ENCODE measurements at regions of chr3 and their contacts with region 1.

Region 1: GRCh38 chr3:39383045-39383880 is at the start of gene SLC25A38:
- DNase-seq: peak; percentile 91
- ATAC-seq: peak; percentile 84
- H3K4me3 Mint-ChIP-seq: peak within 1 kb of the TSS; percentile 94
- H3K27ac Mint-ChIP-seq: peak within 1 kb of the TSS; percentile 99
- H3K4me1 Mint-ChIP-seq: peaks cover 39% of the 10 kb centered on the region
- H3K27me3 Mint-ChIP-seq: no peaks in the 10 kb centered on the region
- CTCF ChIP-seq: peak; percentile 45
- total RNA-seq, gene SLC25A38: 25.0 to 28.2 TPM

Region 2: DNA sequence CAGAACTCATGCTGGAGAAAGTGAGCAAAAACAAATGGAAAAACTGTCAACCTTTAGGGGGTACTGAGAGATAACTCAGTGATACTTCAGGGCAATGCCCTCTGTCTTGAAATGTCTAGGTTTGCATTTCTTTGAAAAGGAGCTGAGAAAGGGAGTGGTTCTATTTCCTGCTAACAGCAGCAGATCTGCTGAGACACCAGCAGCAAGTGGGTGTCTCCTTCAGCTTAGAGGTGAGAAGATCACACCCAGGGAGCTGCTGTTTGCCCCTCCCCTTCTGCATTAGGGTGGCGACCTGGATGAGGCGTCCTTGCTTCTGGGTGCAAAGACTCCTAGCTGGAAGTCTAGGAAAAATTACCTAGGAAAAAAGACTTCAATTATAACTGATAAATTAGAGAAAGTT is 148.6 kb before region 1 on chr3:
- CTCF ChIA-PET with region 1: no interaction called
- POLR2A ChIA-PET with region 1: no interaction called
- intact Hi-C with region 1: no loop called
- DNase-seq: peak; percentile 46
- ATAC-seq: peak; percentile 96
- H3K4me3 Mint-ChIP-seq: no peak overlapping the region
- H3K27ac Mint-ChIP-seq: peak overlapping the region; percentile 64
- H3K4me1 Mint-ChIP-seq: peaks cover 14% of the 10 kb centered on the region
- H3K27me3 Mint-ChIP-seq: peaks cover 7% of the 10 kb centered on the region
- CTCF ChIP-seq: no peak

Region 3: DNA sequence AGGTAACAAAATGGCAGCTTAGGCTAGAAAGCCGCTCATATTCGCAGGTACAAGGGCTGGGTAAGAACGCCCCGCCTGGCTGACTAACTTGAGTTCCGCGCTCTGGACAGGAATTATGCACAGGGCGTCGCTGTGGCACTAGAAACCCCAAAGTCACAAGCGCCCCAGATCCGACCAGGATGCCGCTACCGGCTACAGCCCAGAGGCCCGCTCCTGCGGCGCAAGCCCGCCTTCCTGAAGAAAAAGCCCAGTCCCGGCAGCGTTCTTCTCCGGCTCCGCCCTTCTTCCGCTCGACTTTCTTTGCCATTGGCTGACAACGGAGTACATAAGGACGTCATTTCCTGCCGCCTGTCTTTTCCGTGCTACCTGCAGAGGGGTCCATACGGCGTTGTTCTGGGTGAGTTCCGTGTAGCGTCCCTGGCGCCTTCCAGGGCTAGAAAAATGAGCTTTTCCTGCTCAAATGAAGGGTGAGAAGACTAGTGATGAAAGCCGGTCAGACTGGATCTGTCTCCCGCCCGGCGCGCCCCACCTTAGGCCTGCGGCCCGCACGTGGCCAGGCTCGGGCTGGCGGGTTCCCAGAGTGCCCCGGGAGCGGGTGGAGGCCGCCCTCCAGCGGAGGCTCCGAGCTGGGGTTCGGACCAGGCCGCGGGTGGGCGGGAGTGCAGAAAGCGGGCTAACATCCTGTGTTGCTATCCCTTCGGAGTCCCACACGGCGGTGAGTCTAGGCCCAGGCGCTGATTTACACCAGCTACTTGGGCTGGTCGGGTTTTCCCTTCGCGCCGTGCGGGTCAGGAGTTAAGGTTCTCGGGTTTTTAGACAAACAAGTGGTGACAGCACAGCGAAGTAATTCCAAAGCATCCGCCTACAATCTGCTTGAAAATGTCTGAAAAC is 23.4 kb after region 1 on chr3 and contains the start of gene RPSA:
- CTCF ChIA-PET with region 1: interaction called, 8 read pairs
- POLR2A ChIA-PET with region 1: interaction called, 170 read pairs
- intact Hi-C with region 1: no loop called
- DNase-seq: peak; percentile 98
- ATAC-seq: peak; percentile 89
- H3K4me3 Mint-ChIP-seq: peak within 1 kb of the TSS; percentile 95
- H3K27ac Mint-ChIP-seq: peak within 1 kb of the TSS; percentile 99
- H3K4me1 Mint-ChIP-seq: peaks cover 44% of the 10 kb centered on the region
- H3K27me3 Mint-ChIP-seq: no peaks in the 10 kb centered on the region
- CTCF ChIP-seq: peak; percentile 26
- total RNA-seq, gene RPSA: 3,048 to 3,061 TPM

Region 4: GRCh38 chr3:39423436-39423970 is 40.2 kb after region 1 on chr3:
- CTCF ChIA-PET with region 1: no interaction called
- POLR2A ChIA-PET with region 1: no interaction called
- intact Hi-C with region 1: no loop called
- DNase-seq: no peak
- ATAC-seq: no peak
- H3K4me3 Mint-ChIP-seq: no peak overlapping the region
- H3K27ac Mint-ChIP-seq: no peak overlapping the region
- H3K4me1 Mint-ChIP-seq: no peaks in the 10 kb centered on the region
- H3K27me3 Mint-ChIP-seq: no peaks in the 10 kb centered on the region
- CTCF ChIP-seq: no peak

Region 5: DNA sequence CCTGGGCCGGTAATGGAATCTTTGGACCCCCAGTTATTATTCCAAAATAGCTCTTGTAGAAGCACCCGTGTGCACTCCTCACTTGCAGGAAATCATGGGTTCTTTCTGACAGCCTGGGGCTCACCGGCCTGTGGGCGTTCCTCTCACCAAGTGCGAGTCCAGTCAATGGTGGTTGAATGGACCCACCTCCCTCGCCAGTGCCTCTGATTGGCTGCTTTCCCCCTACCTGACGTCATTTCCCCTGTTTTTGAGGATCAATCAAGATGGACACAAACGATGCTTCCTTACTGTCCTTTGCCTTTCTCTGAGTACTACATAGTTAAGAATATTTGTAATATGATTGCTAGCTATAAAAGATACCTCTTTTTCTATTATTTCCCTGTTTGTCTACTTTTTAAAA is 102.3 kb after region 1 on chr3:
- CTCF ChIA-PET with region 1: no interaction called
- POLR2A ChIA-PET with region 1: no interaction called
- intact Hi-C with region 1: no loop called
- DNase-seq: no peak
- ATAC-seq: no peak
- H3K4me3 Mint-ChIP-seq: no peak overlapping the region
- H3K27ac Mint-ChIP-seq: no peak overlapping the region
- H3K4me1 Mint-ChIP-seq: no peaks in the 10 kb centered on the region
- H3K27me3 Mint-ChIP-seq: peaks cover 7% of the 10 kb centered on the region
- CTCF ChIP-seq: no peak